A549 (cell line): ENCODE measurements at regions of chr6 and their contacts with region 1.

Region 1: GRCh38 chr6:133746417-133746770 is 142.5 kb upstream of the TCF21 start:
- DNase-seq: no peak
- ATAC-seq: no peak
- H3K4me3 ChIP-seq: peak overlapping the region; percentile 34
- H3K27ac ChIP-seq: peak overlapping the region; percentile 82 to 87
- H3K4me1 ChIP-seq: peaks cover 40% of the 10 kb centered on the region
- CTCF ChIP-seq: no peak
- EP300 ChIP-seq: no peak
- POLR2A ChIP-seq: no peak
- RAD21 ChIP-seq: no peak

Region 2: DNA sequence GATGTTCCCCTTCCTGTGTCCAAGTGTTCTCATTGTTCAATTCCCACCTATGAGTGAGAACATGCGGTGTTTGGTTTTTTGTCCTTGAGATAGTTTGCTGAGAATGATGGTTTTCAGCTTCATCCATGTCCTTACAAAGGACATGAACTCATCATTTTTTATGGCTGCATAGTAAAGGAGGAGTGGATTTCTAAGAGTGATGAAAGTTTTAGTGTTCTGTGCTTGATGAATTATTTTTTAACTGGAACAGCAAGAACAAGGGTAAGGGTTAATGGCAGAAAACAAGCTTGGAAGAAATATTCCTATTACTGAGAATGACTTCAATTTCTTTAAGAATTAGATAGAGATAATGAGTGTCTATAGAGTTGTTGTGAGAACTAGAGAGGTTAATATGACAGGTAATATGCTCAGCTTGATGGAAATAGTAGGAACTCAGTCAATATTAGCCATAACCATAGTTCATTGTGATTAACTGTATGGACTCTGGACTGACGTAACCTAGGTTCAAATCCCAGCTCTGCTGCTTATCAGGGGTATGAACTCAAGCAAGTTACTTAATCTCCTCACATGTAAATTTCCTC is 742.0 kb before region 1 on chr6:
- CTCF ChIA-PET with region 1: no interaction called
- POLR2A ChIA-PET with region 1: no interaction called
- DNase-seq: no peak
- ATAC-seq: no peak
- H3K4me3 ChIP-seq: no peak overlapping the region
- H3K27ac ChIP-seq: no peak overlapping the region
- H3K4me1 ChIP-seq: no peaks in the 10 kb centered on the region
- CTCF ChIP-seq: no peak
- EP300 ChIP-seq: no peak
- POLR2A ChIP-seq: no peak
- RAD21 ChIP-seq: no peak

Region 3: DNA sequence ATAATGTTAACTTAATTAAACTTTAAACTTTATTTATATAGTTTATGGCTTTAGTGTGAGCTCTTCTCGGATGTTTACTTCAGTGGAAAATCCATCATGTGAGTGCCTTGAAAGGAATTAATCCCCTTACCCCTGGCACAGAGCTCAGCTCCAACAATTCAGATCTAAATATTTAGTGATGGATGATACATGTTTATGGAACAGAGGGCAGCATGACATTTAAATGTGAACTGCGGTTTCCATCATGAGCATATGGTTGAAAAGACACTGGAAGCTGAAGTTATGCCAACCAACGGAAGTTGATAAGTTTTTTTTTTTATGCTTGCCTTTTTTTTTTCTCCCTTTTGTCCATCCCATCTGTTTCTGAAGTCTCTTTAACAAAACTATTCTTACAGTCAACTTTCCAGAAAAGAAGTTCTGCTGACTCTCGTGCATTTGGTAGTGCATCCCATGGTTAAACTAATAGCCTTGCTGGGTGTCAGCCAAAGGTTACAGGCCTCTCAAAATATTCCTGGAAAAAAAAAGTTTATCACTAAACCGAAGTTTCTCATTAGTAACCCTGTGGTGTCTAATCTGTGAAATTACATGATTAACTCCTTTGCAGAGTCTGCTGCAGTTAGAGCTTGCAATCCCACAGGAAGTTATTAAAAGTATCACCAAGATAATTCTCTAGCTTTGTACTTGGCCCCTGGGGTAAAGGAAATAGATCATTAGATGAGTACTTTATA is 101.3 kb before region 1 on chr6:
- CTCF ChIA-PET with region 1: no interaction called
- POLR2A ChIA-PET with region 1: interaction called, 10 read pairs
- DNase-seq: peak in 1 of 2 experiments; percentile 67
- ATAC-seq: peak in 1 of 2 experiments; percentile 63; a peak in 3 of 6 replicates
- H3K4me3 ChIP-seq: no peak overlapping the region
- H3K27ac ChIP-seq: peak overlapping the region; percentile 79 to 89
- H3K4me1 ChIP-seq: peaks cover 32% of the 10 kb centered on the region
- CTCF ChIP-seq: no peak
- EP300 ChIP-seq: peak in 1 of 2 experiments; percentile 32; a peak in 1 of 5 replicates
- POLR2A ChIP-seq: no peak
- RAD21 ChIP-seq: peak in 1 of 2 experiments; percentile 1; a peak in 2 of 5 replicates

Region 4: GRCh38 chr6:133701633-133702331 is 44.6 kb before region 1 on chr6:
- CTCF ChIA-PET with region 1: no interaction called
- POLR2A ChIA-PET with region 1: no interaction called
- DNase-seq: no peak
- ATAC-seq: no peak
- H3K4me3 ChIP-seq: no peak overlapping the region
- H3K27ac ChIP-seq: peak overlapping the region in 1 of 2 experiments; percentile 44; a peak in 2 of 6 replicates
- H3K4me1 ChIP-seq: peaks cover 20% of the 10 kb centered on the region
- CTCF ChIP-seq: no peak
- EP300 ChIP-seq: no peak
- POLR2A ChIP-seq: no peak
- RAD21 ChIP-seq: no peak